Vagina (tissue), 2 donors: ENCODE measurements at regions of chr15 and their contacts with region 1.

Region 1: DNA sequence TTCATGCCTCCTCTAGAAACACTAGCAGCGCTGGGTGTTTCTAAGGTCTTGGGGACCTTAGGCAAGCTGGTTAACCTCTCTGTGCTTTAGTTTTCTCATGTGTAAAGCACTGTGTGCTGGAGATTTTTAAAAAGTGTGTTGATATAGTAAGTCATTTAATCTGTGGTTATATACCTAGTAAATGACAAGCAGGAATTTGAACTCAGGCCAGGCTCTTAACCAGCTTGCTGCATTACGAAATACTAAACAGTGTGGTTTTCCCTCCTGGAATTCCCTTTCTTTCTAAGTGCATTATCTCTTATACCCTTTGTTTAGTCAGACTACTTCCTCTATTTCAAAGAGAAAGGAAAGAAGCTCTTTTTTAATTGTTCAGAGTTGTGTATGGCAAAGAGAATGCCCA is 26.5 kb downstream of the NEO1 start:
- DNase-seq: no peak
- H3K4me3 ChIP-seq: no peak overlapping the region
- H3K27ac ChIP-seq: no peak overlapping the region
- H3K4me1 ChIP-seq: peaks cover 52% of the 10 kb centered on the region
- H3K27me3 ChIP-seq: no peaks in the 10 kb centered on the region
- CTCF ChIP-seq: no peak
- POLR2A ChIP-seq: no peak

Region 2: GRCh38 chr15:72796515-72797337 is 282.0 kb before region 1 on chr15:
- intact Hi-C with region 1: loop called (anchors 5 kb)
- DNase-seq: no peak
- H3K4me3 ChIP-seq: peak overlapping the region; percentile 51 to 60
- H3K27ac ChIP-seq: peak overlapping the region; percentile 1
- H3K4me1 ChIP-seq: peaks cover 15% of the 10 kb centered on the region
- H3K27me3 ChIP-seq: no peaks in the 10 kb centered on the region
- CTCF ChIP-seq: peak in 2 of 3 experiments; percentile 15 to 74
- POLR2A ChIP-seq: no peak